ENCODE measurements at regions of chr5 and their contacts with region 1.

Region 1: GRCh38 chr5:14595189-14595588 is 13.6 kb downstream of the OTULINL start:
- DNase-seq: peak; percentile 89
- H3K4me3 Mint-ChIP-seq: peak overlapping the region; percentile 78
- H3K27ac Mint-ChIP-seq: peak overlapping the region; percentile 94
- H3K4me1 Mint-ChIP-seq: peaks cover 78% of the 10 kb centered on the region
- H3K27me3 Mint-ChIP-seq: no peaks in the 10 kb centered on the region

Region 2: DNA sequence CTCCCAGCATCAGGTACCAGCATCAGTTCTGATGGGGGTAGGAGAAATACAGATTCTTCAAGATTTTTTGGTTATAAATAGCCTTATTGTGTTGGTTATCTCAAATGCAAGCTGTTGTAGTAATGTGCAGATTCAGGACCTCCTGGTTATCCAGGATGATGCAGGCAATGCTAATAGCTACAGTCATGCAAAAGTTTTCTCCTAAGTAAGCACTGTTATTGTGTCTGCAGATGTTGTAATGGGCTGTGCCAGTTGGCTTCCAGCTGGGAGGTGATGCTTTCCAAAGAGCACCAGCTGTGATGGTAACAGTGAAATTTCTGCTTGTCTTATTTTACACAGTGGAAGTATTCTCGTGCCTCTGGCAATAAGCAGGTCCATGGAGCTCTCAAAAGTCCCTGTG is 1971.8 kb before region 1 on chr5:
- intact Hi-C with region 1: no loop called
- DNase-seq: no peak
- H3K4me3 Mint-ChIP-seq: no peak overlapping the region
- H3K27ac Mint-ChIP-seq: no peak overlapping the region
- H3K4me1 Mint-ChIP-seq: no peaks in the 10 kb centered on the region
- H3K27me3 Mint-ChIP-seq: no peaks in the 10 kb centered on the region

Region 3: DNA sequence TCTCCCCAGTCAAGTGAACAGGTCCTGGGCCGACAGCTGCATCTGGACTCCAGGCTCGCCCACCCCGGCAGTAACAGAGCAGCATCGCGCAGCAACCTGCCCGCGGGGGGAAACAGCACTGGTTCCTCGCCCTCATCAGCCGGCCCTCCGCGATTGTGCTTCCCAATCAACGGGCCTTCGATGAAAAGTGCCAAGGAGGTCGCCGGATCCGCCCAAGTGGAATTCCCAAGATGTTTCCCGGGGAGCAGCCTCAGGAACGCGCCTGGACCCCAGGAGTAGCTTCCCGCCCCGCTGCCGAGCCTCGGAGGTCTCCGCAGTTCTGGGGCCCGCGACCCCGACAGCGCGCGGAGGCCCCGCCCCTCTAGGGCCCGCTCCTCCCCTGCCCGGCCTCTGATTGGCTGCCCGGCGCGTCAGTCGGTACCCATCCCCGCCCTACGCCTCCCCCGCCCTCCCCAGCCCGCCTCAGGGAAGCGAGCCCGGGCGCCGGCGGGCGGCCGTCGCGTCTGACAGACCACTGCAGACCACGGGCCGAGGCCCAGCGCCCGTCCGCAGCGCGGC is 13.8 kb before region 1 on chr5 and contains the start of gene OTULINL:
- intact Hi-C with region 1: loop called (anchors 1 kb)
- DNase-seq: peak; percentile 95
- H3K4me3 Mint-ChIP-seq: peak within 1 kb of the TSS; percentile 83
- H3K27ac Mint-ChIP-seq: peak within 1 kb of the TSS; percentile 69
- H3K4me1 Mint-ChIP-seq: peaks cover 31% of the 10 kb centered on the region
- H3K27me3 Mint-ChIP-seq: peaks cover 16% of the 10 kb centered on the region
- total RNA-seq, gene OTULINL: 9.4 and 11.4 TPM in 2 replicates